ENCODE measurements at regions of chr5 and their contacts with region 1.

Region 1: GRCh38 chr5:36875790-36876388 is 680 bp upstream of the NIPBL start:
- DNase-seq: peak; percentile 75 to 92
- H3K4me3 ChIP-seq: peak overlapping the region; percentile 81
- H3K27ac ChIP-seq: peak overlapping the region; percentile 55
- H3K4me1 ChIP-seq: peaks cover 53% of the 10 kb centered on the region
- H3K27me3 ChIP-seq: no peaks in the 10 kb centered on the region
- CTCF ChIP-seq: peak; percentile 58; the same call in 1 of the 2 replicates

Region 2: DNA sequence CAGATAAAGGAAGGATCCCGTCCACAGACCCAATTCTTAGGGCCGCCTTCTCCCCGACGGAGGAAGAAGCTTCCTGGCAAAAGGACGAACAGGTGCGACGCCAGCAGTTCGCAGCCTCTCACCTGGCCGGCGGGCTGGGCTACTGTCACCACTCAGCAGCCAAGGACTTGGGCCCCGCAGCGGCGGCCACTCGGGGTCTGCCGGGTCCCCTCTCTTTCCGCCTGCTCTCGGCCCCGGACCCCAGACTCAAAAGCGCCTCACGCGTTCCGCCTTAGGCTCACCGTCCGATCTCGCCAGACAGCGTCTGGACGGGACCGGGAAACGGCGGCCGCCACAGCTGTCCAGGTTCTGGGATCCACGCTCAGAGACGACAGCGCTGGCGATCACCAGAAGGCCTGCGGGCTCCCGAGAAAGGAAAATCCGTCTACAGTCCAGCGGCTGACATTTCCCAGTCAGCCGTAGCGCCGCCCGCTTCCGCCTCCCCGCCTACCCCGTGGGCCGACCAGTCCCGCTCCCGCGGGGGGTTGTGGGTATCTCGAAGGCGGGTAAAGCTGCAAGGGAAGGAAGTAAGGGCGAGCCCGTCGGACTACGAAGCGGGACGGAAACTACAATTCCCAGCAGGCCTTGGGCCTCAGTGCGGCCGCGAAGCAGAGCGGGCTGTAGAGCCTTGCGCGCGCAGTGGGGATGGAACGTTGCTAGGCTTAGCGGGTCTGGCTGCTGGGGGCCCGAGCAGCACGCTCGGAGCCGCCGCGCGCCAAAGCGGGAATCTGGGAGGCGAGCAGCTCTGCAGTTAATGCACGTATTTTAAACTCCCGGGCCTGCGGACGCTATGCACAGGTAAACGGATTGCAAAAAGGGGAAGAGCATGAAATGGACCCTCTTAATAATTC is 724.2 kb before region 1 on chr5 and contains the starts of genes LMBRD2 and SKP2:
- CTCF ChIA-PET with region 1: no interaction called
- POLR2A ChIA-PET with region 1: interaction called, 4 read pairs
- intact Hi-C with region 1: loop called (anchors 5 kb)
- DNase-seq: peak; percentile 98 to 100
- H3K4me3 ChIP-seq: peak within 1 kb of the TSS; percentile 90
- H3K27ac ChIP-seq: peak within 1 kb of the TSS; percentile 38
- H3K4me1 ChIP-seq: peaks cover 17% of the 10 kb centered on the region
- H3K27me3 ChIP-seq: no peaks in the 10 kb centered on the region
- CTCF ChIP-seq: no peak
- total RNA-seq, gene LMBRD2: 8.5 and 18.0 TPM in 2 replicates
- total RNA-seq, gene SKP2: 121 and 153 TPM in 2 replicates

Region 3: DNA sequence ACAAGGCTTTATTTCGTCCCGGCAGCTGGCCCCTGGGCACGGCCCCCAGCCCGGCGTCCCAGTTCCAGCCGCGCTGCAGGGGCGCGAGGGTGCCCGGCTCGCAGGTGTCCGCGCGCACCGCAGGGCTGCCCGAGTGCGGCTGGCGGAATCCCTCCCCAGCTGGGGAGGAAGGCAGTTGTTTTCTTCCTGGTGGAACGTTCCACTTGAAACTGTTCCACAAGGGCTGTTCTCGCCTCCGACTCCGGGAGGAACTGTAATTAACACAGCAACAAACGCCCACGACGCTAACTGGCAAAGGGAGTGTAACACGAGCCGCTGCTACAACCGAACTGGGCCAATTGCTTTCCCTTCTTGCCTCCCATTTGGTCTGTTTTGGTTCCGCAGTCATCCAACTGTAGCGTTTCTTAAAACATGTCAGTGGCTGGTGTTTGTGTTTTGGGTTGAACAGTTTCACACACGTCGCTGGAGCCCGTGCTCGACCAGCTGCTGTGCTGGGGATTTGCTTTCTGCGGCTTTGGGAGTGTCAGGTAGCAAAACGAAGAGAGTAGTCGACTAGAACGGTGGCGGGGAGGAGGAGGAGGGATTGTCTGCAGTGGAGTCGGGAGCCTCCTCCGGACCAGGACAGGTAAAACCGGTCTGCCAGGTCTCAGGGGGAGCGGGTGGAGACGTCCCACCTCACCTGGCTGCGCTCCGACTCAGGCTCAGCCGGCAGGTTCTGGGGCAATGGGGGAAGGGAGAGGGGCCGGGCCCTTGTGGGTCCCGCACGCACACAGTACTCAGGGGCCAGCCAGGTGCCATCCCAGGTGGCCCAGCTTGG is 130.9 kb before region 1 on chr5:
- CTCF ChIA-PET with region 1: interaction called, 10 read pairs
- POLR2A ChIA-PET with region 1: interaction called, 3 read pairs
- intact Hi-C with region 1: loop called (anchors 1 kb)
- DNase-seq: peak; percentile 93 to 97
- H3K4me3 ChIP-seq: peak overlapping the region; percentile 61
- H3K27ac ChIP-seq: peak overlapping the region; percentile 51
- H3K4me1 ChIP-seq: peaks cover 20% of the 10 kb centered on the region
- H3K27me3 ChIP-seq: no peaks in the 10 kb centered on the region
- CTCF ChIP-seq: peak; percentile 89; the same call in 1 of the 2 replicates

Region 4: DNA sequence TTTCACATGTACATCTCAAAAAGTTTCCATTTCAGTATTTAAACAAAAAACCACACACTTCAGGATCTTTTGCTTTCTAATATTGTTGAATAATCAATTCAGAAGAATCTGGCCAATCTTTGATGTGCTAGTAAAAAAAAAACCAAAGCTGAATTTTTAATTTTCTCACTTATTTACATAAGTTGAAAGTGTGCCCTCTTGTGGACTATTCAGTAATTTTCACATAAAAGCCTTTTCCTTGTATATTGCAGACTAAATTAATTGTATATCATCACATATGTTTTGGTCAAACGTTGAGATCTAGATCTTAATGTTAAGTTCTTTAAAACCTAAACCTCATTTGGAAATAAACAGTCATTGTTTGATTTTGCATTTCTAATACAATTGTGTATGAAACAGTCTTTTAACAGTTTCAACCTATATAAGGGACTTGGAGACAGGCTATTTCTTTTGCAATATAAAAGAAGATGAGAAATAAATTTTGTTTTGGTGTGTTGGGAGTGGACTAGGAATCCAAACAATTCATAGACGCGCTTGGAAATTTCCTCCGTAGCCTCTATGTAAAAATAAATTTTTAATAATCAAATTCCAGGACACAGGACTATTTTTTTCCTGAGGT is 68.8 kb after region 1 on chr5:
- CTCF ChIA-PET with region 1: interaction called, 9 read pairs
- POLR2A ChIA-PET with region 1: interaction called, 6 read pairs
- intact Hi-C with region 1: loop called (anchors 1 kb)
- DNase-seq: peak in 1 of 2 experiments; percentile 67
- H3K4me3 ChIP-seq: no peak overlapping the region
- H3K27ac ChIP-seq: no peak overlapping the region
- H3K4me1 ChIP-seq: peaks cover 7% of the 10 kb centered on the region
- H3K27me3 ChIP-seq: no peaks in the 10 kb centered on the region
- CTCF ChIP-seq: peak; percentile 91

Region 5: GRCh38 chr5:37370864-37371726 is 495.2 kb after region 1 on chr5 and contains the start of gene NUP155:
- CTCF ChIA-PET with region 1: no interaction called
- POLR2A ChIA-PET with region 1: no interaction called
- intact Hi-C with region 1: loop called (anchors 1 kb)
- DNase-seq: peak; percentile 91 to 96
- H3K4me3 ChIP-seq: peak within 1 kb of the TSS; percentile 95
- H3K27ac ChIP-seq: peak within 1 kb of the TSS; percentile 43
- H3K4me1 ChIP-seq: peaks cover 15% of the 10 kb centered on the region
- H3K27me3 ChIP-seq: no peaks in the 10 kb centered on the region
- CTCF ChIP-seq: no peak
- total RNA-seq, gene NUP155: 62.7 and 92.3 TPM in 2 replicates